ENCODE measurements at regions of chr1 and their contacts with region 1.

Region 1: GRCh38 chr1:222680080-222680479 is 32.2 kb downstream of the AIDA start:
- DNase-seq: no peak
- H3K4me3 ChIP-seq: no peak overlapping the region
- H3K27ac ChIP-seq: no peak overlapping the region
- H3K4me1 ChIP-seq: no peaks in the 10 kb centered on the region
- H3K27me3 ChIP-seq: no peaks in the 10 kb centered on the region
- CTCF ChIP-seq: no peak

Region 2: GRCh38 chr1:222754366-222755139 is 74.5 kb after region 1 on chr1:
- CTCF ChIA-PET with region 1: interaction called, 10 read pairs
- POLR2A ChIA-PET with region 1: no interaction called
- intact Hi-C with region 1: no loop called
- DNase-seq: peak in 1 of 2 experiments; percentile 69
- H3K4me3 ChIP-seq: no peak overlapping the region
- H3K27ac ChIP-seq: no peak overlapping the region
- H3K4me1 ChIP-seq: no peaks in the 10 kb centered on the region
- H3K27me3 ChIP-seq: peaks cover 27% of the 10 kb centered on the region
- CTCF ChIP-seq: no peak

Region 3: GRCh38 chr1:223087291-223088255 is 407.5 kb after region 1 on chr1:
- CTCF ChIA-PET with region 1: no interaction called
- POLR2A ChIA-PET with region 1: no interaction called
- intact Hi-C with region 1: no loop called
- DNase-seq: no peak
- H3K4me3 ChIP-seq: no peak overlapping the region
- H3K27ac ChIP-seq: no peak overlapping the region
- H3K4me1 ChIP-seq: no peaks in the 10 kb centered on the region
- H3K27me3 ChIP-seq: 0 out of 2 replicates have a peak, but pooled peaks cover 6% of the 10 kb centered on the region
- CTCF ChIP-seq: no peak

Measured in PC-9 (cell line).